GM12878 (cell line): ENCODE measurements at regions of chr11 and their contacts with region 1.

Region 1: DNA sequence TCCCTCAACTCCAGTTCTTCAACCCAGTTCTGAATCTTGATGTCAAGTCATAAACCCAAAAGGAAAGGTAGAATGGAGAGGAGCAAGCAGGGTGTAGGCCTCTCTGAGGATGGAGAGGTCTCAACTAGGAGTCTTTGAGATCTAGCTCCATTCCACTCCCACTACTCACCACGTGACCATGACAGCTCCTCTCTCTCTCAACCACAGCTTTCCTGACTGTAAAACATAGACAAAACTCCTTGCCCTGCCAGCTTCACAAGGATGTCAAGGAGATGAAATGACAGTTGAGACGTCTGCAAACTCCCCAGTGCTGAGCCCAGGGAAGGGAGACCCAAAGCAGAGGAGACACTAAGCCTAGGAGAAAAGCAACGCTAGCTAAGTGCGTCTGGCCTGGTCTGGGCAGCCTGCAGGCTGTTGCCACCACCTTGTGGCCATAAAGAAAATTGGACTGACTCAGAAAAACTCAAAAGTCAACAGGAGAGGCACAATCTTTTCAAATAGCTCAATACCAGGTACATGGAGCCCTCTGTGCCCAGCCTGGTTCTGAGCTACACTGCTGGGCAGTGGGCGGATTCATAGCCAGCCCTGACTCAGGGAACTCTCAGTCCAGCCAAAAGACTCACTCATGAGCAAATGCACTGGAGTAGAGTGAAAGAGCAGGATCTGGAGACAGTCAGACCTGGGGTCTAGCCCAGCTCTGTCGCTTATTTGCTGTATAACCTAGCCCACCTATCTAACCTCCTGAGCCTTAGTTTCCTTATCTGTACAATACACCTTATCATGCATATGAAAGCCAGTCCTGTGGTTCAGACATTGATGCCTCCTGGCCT is 3.4 kb downstream of the CLPB start:
- DNase-seq: no peak
- ATAC-seq: peak; percentile 63
- H3K4me3 ChIP-seq: no peak overlapping the region
- H3K27ac ChIP-seq: peak overlapping the region; percentile 24; the same call in 1 of the 2 replicates
- H3K4me1 ChIP-seq: peaks cover 12% of the 10 kb centered on the region
- H3K27me3 ChIP-seq: no peaks in the 10 kb centered on the region
- CTCF ChIP-seq: peak; percentile 79 to 94 (median 92)
- EP300 ChIP-seq: no peak
- POLR2A ChIP-seq: no peak
- RAD21 ChIP-seq: peak; percentile 89

Region 2: DNA sequence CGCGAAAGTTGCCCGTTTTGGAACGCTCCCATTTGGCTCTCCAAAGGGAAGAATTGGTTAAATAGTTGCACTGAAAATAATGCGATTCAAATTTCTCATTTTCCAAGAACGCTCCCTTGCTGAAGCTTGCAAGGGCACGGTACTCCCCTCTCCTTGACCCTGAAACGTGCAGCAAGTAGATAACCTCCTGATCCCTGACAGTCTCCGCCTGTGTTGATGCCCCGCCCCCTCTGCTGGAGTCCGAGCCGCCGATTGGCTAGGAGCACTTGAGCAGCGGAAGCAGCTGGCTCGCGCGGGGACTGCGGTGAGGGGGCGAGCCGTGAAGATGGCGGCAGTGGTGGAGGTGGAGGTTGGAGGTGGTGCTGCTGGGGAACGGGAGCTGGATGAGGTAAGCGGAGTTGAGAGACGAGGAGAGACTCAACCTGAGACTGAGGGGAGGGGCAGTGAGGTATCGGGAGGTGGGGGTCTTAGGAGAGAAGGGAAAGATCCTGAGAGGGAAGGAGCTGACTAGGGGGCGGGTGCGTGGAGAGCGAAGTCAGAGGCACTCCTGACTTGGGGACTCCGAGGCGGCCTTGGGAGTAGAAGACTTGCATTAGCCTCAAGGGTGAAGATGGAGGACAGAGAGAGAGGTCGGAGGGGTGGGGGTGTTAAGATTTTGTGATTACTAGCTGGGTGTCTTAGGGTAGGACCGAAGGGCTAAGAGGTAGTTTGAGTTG is 502.1 kb before region 1 on chr11 and contains the start of gene RNF121:
- CTCF ChIA-PET with region 1: interaction called, 11 read pairs
- POLR2A ChIA-PET with region 1: no interaction called
- RAD21 ChIA-PET with region 1: interaction called, 5 read pairs
- SMC1A ChIA-PET with region 1: interaction called, 4 read pairs
- in situ Hi-C with region 1: no loop called
- intact Hi-C with region 1: no loop called
- DNase-seq: peak; percentile 92
- ATAC-seq: peak; percentile 87
- H3K4me3 ChIP-seq: peak within 1 kb of the TSS; percentile 86
- H3K27ac ChIP-seq: peak within 1 kb of the TSS; percentile 98
- H3K4me1 ChIP-seq: peaks cover 22% of the 10 kb centered on the region
- H3K27me3 ChIP-seq: no peaks in the 10 kb centered on the region
- CTCF ChIP-seq: no peak
- EP300 ChIP-seq: no peak
- POLR2A ChIP-seq: peak; percentile 96
- RAD21 ChIP-seq: no peak
- polyA plus RNA-seq, gene RNF121: 8.6 to 19.0 TPM

Region 3: GRCh38 chr11:72102946-72103753 is 327.8 kb before region 1 on chr11 and contains the start of gene LAMTOR1:
- CTCF ChIA-PET with region 1: interaction called, 17 read pairs
- POLR2A ChIA-PET with region 1: no interaction called
- RAD21 ChIA-PET with region 1: interaction called, 9 read pairs
- SMC1A ChIA-PET with region 1: interaction called, 11 read pairs
- in situ Hi-C with region 1: no loop called
- intact Hi-C with region 1: no loop called
- DNase-seq: peak; percentile 97
- ATAC-seq: peak; percentile 97
- H3K4me3 ChIP-seq: peak within 1 kb of the TSS; percentile 94
- H3K27ac ChIP-seq: peak within 1 kb of the TSS; percentile 90
- H3K4me1 ChIP-seq: peaks cover 21% of the 10 kb centered on the region
- H3K27me3 ChIP-seq: no peaks in the 10 kb centered on the region
- CTCF ChIP-seq: peak; percentile 20 to 48 (median 40); a peak in 5 of 6 replicates
- EP300 ChIP-seq: peak in 1 of 2 experiments; percentile 17; a peak in 1 of 4 replicates
- POLR2A ChIP-seq: peak; percentile 94
- RAD21 ChIP-seq: no peak
- polyA plus RNA-seq, gene LAMTOR1: 85.1 to 126 TPM

Region 4: GRCh38 chr11:72222907-72223614 is 207.9 kb before region 1 on chr11:
- CTCF ChIA-PET with region 1: interaction called, 14 read pairs
- POLR2A ChIA-PET with region 1: interaction called, 3 read pairs
- RAD21 ChIA-PET with region 1: interaction called, 11 read pairs
- SMC1A ChIA-PET with region 1: interaction called, 3 read pairs
- in situ Hi-C with region 1: no loop called
- intact Hi-C with region 1: loop called (anchors 5 kb)
- DNase-seq: peak; percentile 76
- ATAC-seq: peak; percentile 85
- H3K4me3 ChIP-seq: peak overlapping the region; percentile 99
- H3K27ac ChIP-seq: peak overlapping the region; percentile 75
- H3K4me1 ChIP-seq: peaks cover 23% of the 10 kb centered on the region
- H3K27me3 ChIP-seq: no peaks in the 10 kb centered on the region
- CTCF ChIP-seq: no peak
- EP300 ChIP-seq: no peak
- POLR2A ChIP-seq: peak; percentile 66; the same call in 1 of the 2 replicates
- RAD21 ChIP-seq: no peak

Region 5: DNA sequence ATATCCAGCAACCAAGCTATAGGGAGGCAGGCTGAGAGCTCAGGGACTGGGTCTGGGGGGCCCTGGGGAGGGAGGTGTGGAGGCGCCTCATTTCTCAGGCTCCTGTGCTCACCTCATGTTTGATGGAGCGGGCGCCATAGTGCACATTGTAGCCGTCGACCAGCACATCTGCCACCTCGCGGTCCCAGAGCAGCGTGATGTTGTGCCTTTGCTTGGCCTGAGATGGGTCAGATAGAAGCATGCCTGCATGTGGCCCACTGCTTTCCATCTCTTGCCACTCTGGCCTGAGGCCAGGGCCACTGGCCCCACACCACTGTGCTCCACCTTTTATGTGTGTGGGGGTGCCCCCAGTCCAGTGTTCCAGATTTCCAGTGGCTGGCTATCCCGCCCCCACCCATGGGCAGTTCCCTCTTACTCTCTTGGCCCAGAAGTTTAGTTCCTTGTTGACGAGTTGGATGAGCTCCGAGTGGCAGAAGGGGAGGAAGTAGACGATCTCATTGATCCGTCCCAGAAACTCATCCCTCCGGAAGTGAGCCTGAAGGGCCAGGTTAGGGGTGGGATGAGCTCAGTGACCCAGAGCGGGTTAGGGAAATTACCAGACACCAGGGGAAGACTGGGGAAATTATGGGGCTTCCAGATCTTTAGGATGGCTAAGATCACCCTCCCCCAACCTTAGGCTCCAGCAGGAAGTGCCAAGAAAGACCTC is 136.9 kb before region 1 on chr11:
- CTCF ChIA-PET with region 1: interaction called, 118 read pairs
- POLR2A ChIA-PET with region 1: no interaction called
- RAD21 ChIA-PET with region 1: interaction called, 12 read pairs
- SMC1A ChIA-PET with region 1: interaction called, 11 read pairs
- in situ Hi-C with region 1: no loop called
- intact Hi-C with region 1: loop called (anchors 2 kb)
- DNase-seq: no peak
- ATAC-seq: no peak
- H3K4me3 ChIP-seq: no peak overlapping the region
- H3K27ac ChIP-seq: no peak overlapping the region
- H3K4me1 ChIP-seq: no peaks in the 10 kb centered on the region
- H3K27me3 ChIP-seq: no peaks in the 10 kb centered on the region
- CTCF ChIP-seq: no peak
- EP300 ChIP-seq: no peak
- POLR2A ChIP-seq: no peak
- RAD21 ChIP-seq: no peak

Region 6: GRCh38 chr11:72352859-72353551 is 78.0 kb before region 1 on chr11:
- CTCF ChIA-PET with region 1: interaction called, 28 read pairs
- POLR2A ChIA-PET with region 1: no interaction called
- RAD21 ChIA-PET with region 1: interaction called, 19 read pairs
- SMC1A ChIA-PET with region 1: interaction called, 26 read pairs
- in situ Hi-C with region 1: no loop called
- intact Hi-C with region 1: no loop called
- DNase-seq: peak; percentile 47
- ATAC-seq: peak; percentile 96
- H3K4me3 ChIP-seq: 0 out of 2 replicates have a peak overlapping the region, but pooled peaks have one; percentile 27
- H3K27ac ChIP-seq: peak overlapping the region; percentile 69
- H3K4me1 ChIP-seq: peaks cover 15% of the 10 kb centered on the region
- H3K27me3 ChIP-seq: no peaks in the 10 kb centered on the region
- CTCF ChIP-seq: peak; percentile 43 to 82 (median 49); a peak in 5 of 6 replicates
- EP300 ChIP-seq: peak in 1 of 2 experiments; percentile 14; a peak in 1 of 4 replicates
- POLR2A ChIP-seq: no peak
- RAD21 ChIP-seq: peak; percentile 82

Region 7: GRCh38 chr11:72471005-72471898 is 40.3 kb after region 1 on chr11:
- CTCF ChIA-PET with region 1: interaction called, 13 read pairs
- POLR2A ChIA-PET with region 1: no interaction called
- RAD21 ChIA-PET with region 1: no interaction called
- SMC1A ChIA-PET with region 1: interaction called, 4 read pairs
- in situ Hi-C with region 1: no loop called
- intact Hi-C with region 1: no loop called
- DNase-seq: no peak
- ATAC-seq: peak; percentile 93
- H3K4me3 ChIP-seq: no peak overlapping the region
- H3K27ac ChIP-seq: no peak overlapping the region
- H3K4me1 ChIP-seq: no peaks in the 10 kb centered on the region
- H3K27me3 ChIP-seq: peaks cover 0 to 8% of the 10 kb centered on the region in 2 experiments; a peak in 1 of 4 replicates
- CTCF ChIP-seq: peak; percentile 83 to 86 (median 85)
- EP300 ChIP-seq: no peak
- POLR2A ChIP-seq: no peak
- RAD21 ChIP-seq: peak; percentile 71